Mammary epithelial cell (primary cell): ENCODE measurements at regions of chr12 and their contacts with region 1.

Region 1: GRCh38 chr12:105420659-105421240 is 90.3 kb downstream of the C12orf75 start:
- DNase-seq: peak; percentile 63
- H3K4me3 ChIP-seq: no peak overlapping the region
- H3K27ac ChIP-seq: no peak overlapping the region
- H3K4me1 ChIP-seq: peaks cover 19% of the 10 kb centered on the region
- H3K27me3 ChIP-seq: no peaks in the 10 kb centered on the region
- CTCF ChIP-seq: peak; percentile 90 to 95

Region 2: DNA sequence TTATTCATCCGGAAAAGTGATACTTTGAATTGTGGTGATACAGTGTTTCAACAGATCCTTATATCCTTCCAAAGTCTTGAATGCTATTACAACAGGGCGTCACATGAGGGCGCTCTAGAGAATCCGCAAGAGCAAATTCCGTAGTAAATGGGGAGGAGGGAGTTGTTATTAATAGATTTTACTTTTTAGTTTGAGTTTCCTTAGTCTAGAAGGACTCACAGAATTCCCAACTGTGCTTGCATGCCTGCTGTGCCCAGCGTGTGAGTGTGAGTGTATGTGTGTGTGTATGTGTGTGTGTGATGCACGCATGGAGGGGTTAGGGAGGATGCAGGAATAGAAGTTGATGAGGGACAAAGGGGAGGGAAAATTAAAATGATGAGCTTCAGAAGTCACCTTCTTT is 285.0 kb after region 1 on chr12:
- CTCF ChIA-PET with region 1: no interaction called
- dilution Hi-C with region 1: no loop called
- in situ Hi-C with region 1: loop called in 1 of 2 experiments (anchors 10 kb)
- intact Hi-C with region 1: loop called (anchors 1 kb)
- DNase-seq: peak; percentile 30
- H3K4me3 ChIP-seq: no peak overlapping the region
- H3K27ac ChIP-seq: no peak overlapping the region
- H3K4me1 ChIP-seq: peaks cover 8% of the 10 kb centered on the region
- H3K27me3 ChIP-seq: no peaks in the 10 kb centered on the region
- CTCF ChIP-seq: peak; percentile 74 to 80

Region 3: DNA sequence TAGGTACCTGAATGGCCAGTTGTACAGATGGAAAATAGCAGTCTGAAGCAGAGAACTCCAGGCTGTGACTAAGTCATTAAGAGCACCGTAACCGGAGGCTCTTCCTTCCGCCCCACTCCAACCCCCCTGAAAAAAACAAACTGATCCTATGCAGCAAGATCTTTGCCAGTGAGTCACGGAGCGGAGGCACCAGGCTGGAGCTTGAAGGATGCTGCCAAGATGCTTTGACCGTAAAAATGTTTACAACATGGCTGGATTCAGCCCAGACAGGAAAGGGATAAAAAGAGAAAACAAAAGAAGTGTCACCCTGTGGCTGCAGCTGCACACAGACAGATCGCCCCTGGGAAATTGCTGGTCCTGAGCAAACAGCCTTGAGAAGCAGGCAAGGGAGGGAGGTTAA is 513.5 kb after region 1 on chr12:
- CTCF ChIA-PET with region 1: no interaction called
- dilution Hi-C with region 1: no loop called
- in situ Hi-C with region 1: no loop called
- intact Hi-C with region 1: loop called (anchors 2 kb)
- DNase-seq: peak; percentile 95
- H3K4me3 ChIP-seq: peak overlapping the region in 1 of 3 experiments; percentile 29
- H3K27ac ChIP-seq: peak overlapping the region; percentile 78
- H3K4me1 ChIP-seq: peaks cover 71% of the 10 kb centered on the region
- H3K27me3 ChIP-seq: no peaks in the 10 kb centered on the region
- CTCF ChIP-seq: no peak

Region 4: DNA sequence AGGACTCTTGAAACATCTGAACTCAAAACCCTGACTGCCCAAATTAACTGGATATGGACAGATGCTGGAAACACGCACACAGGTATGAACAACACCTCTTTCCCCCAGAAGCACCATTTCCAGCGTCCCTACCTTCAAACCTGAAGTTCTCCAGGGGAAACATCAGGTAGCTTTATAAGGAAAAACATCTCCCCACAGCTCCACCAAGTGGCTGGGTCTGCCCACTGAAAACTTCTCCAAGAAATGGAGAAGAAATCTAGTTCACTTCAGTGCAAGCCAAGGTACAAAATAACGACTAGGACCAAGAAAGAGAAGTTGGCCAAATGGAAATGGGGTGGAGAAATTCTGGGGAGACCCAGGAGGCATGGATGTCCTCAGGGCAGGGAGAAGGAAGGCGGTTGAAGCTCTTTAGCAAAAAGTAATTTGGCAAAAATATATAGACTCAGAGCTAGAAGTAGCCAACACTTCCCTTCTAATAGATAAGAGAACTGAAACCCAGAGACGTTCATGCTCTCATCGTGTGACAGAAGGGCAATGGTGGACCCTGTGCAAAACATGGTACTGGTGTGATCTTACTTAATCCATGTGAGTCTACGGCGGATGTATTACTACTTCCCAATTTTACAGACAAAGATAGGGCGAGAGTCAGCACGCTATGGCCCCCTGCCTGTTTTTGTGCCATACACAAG is 728.5 kb after region 1 on chr12:
- CTCF ChIA-PET with region 1: interaction called, 4 read pairs
- dilution Hi-C with region 1: no loop called
- in situ Hi-C with region 1: loop called in 1 of 2 experiments (anchors 5 kb)
- intact Hi-C with region 1: loop called (anchors 1 kb)
- DNase-seq: no peak
- H3K4me3 ChIP-seq: no peak overlapping the region
- H3K27ac ChIP-seq: no peak overlapping the region
- H3K4me1 ChIP-seq: no peaks in the 10 kb centered on the region
- H3K27me3 ChIP-seq: no peaks in the 10 kb centered on the region
- CTCF ChIP-seq: peak; percentile 67 to 82

Region 5: DNA sequence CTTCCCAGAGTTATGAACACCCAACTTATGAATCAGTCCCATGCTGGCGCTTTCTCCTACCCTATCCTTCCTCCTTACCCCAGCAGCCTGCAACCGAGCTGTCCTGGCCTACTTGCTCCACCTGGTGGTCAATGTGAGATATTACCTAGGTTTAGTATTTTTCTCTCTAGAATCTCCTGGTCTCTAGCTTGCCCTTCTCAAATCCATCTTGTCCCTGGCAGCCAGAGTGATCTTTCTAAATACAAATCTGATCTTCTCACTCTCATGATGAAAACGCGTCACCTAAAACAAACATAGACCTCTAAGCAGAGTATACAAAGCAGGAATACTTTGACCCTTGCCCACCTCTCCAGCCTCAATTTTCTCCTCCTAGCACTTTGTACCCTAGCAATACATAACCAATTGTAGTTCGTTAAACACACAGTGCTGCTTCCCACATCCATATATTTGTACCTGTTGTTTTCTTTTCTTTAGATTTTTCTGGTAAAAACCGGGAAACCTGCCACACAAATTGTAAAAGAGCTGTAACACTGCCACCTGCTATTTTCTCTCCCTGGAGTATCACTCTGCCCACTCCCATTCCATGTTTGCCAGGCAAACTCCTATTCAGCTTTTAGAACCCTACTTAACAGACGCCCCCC is 861.8 kb after region 1 on chr12:
- CTCF ChIA-PET with region 1: no interaction called
- dilution Hi-C with region 1: no loop called
- in situ Hi-C with region 1: no loop called
- intact Hi-C with region 1: loop called (anchors 2 kb)
- DNase-seq: peak; percentile 63
- H3K4me3 ChIP-seq: no peak overlapping the region
- H3K27ac ChIP-seq: no peak overlapping the region
- H3K4me1 ChIP-seq: peaks cover 9% of the 10 kb centered on the region
- H3K27me3 ChIP-seq: no peaks in the 10 kb centered on the region
- CTCF ChIP-seq: peak; percentile 79 to 83